Gastrocnemius medialis (tissue), 4 donors: ENCODE measurements at regions of chr6 and their contacts with region 1.

Region 1: GRCh38 chr6:123380257-123380656 is 256.5 kb downstream of the TRDN start:
- DNase-seq: no peak
- ATAC-seq: no peak
- H3K4me3 ChIP-seq: no peak overlapping the region
- H3K27ac ChIP-seq: peak overlapping the region in 1 of 4 donors; percentile 3
- H3K4me1 ChIP-seq: no peaks in the 10 kb centered on the region
- H3K27me3 ChIP-seq: no peaks in the 10 kb centered on the region
- CTCF ChIP-seq: peak in 2 of 5 experiments; percentile 15 to 19
- POLR2A ChIP-seq: no peak

Region 2: DNA sequence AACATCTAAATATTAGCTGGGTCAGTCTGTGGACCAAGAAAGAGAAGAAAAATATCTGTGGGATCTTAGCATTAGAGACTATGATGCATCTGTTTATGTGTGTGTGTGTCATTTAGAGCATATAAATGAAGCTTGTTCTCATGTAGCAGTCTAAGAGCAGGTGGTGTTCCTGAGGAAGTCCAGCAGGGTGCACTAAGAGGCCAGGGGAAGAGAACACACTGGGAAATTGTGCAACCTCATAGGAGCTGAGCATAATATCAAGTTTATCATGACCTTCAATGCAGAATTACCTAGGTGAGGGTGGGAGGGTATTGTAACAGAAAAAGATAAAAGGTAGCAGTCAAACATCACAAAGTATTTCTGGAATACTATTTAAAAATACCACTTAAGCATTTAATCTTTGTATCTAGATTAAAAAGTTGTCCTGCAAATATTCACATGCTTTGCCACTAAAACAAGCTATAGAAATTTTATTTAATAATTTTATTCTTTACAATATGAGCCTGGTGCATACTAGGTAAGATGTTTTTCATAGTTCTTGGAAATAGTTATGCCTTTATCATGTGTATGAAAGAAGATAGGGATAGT is 510.7 kb before region 1 on chr6:
- in situ Hi-C with region 1: no loop called
- intact Hi-C with region 1: loop called (anchors 2 kb)
- DNase-seq: peak; percentile 7 to 39
- ATAC-seq: peak; percentile 97 to 98
- H3K4me3 ChIP-seq: no peak overlapping the region
- H3K27ac ChIP-seq: no peak overlapping the region
- H3K4me1 ChIP-seq: peaks cover 0 to 4% of the 10 kb centered on the region in 2 donors
- H3K27me3 ChIP-seq: no peaks in the 10 kb centered on the region
- CTCF ChIP-seq: peak; percentile 46 to 70 (median 63)
- POLR2A ChIP-seq: no peak